ENCODE measurements at regions of chr5 and their contacts with region 1.

Region 1: DNA sequence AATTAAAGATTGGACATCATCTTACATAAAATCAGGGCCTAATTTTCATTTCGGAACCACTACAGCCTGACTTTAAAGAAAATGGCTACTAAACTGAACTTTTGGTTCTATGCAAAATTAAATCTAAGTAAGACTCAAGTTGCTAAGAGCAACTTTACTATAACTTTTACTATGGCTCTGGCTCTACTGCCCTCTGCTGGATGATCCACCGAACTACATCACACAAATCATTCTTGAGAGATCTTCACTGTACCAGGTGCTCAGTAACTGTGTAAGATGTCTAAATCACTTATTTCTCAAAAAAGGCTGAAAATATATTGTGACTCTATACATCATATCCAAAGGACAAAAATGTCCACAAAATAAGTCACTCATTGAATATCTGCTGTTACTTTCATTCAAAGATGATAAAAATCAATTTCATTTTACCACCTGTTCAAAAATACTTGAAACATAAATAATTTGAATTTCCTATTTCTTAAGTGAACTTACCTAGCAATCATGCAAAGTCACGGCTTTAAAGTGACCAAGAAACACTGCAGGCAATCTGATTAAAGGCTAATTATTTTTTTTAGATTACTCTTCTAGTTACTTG is 13.5 kb downstream of the MOCS2 start:
- DNase-seq: peak; percentile 56
- H3K4me3 ChIP-seq: no peak overlapping the region
- H3K27ac ChIP-seq: no peak overlapping the region
- H3K4me1 ChIP-seq: peaks cover 18% of the 10 kb centered on the region
- H3K27me3 ChIP-seq: no peaks in the 10 kb centered on the region

Region 2: GRCh38 chr5:52469835-52470234 is 626.2 kb before region 1 on chr5:
- in situ Hi-C with region 1: no loop called
- DNase-seq: no peak
- H3K4me3 ChIP-seq: no peak overlapping the region
- H3K27ac ChIP-seq: no peak overlapping the region
- H3K4me1 ChIP-seq: no peaks in the 10 kb centered on the region
- H3K27me3 ChIP-seq: no peaks in the 10 kb centered on the region

Region 3: GRCh38 chr5:52491071-52491787 is 604.8 kb before region 1 on chr5:
- in situ Hi-C with region 1: no loop called
- DNase-seq: no peak
- H3K4me3 ChIP-seq: no peak overlapping the region
- H3K27ac ChIP-seq: no peak overlapping the region
- H3K4me1 ChIP-seq: no peaks in the 10 kb centered on the region
- H3K27me3 ChIP-seq: no peaks in the 10 kb centered on the region

Region 4: GRCh38 chr5:52709171-52709925 is 386.7 kb before region 1 on chr5:
- in situ Hi-C with region 1: loop called (anchors 25 kb)
- DNase-seq: peak; percentile 56
- H3K4me3 ChIP-seq: no peak overlapping the region
- H3K27ac ChIP-seq: peak overlapping the region; percentile 49
- H3K4me1 ChIP-seq: peaks cover 43% of the 10 kb centered on the region
- H3K27me3 ChIP-seq: no peaks in the 10 kb centered on the region

Region 5: GRCh38 chr5:52948418-52949076 is 147.5 kb before region 1 on chr5:
- in situ Hi-C with region 1: loop called (anchors 5 kb)
- DNase-seq: peak; percentile 85
- H3K4me3 ChIP-seq: no peak overlapping the region
- H3K27ac ChIP-seq: peak overlapping the region; percentile 29
- H3K4me1 ChIP-seq: peaks cover 42% of the 10 kb centered on the region
- H3K27me3 ChIP-seq: no peaks in the 10 kb centered on the region